Testis (tissue), 5 donors: ENCODE measurements at regions of chr3 and their contacts with region 1.

Region 1: GRCh38 chr3:100590114-100590839 is 19.1 kb upstream of the ADGRG7 start:
- DNase-seq: peak; percentile 81
- H3K4me3 ChIP-seq: no peak overlapping the region
- H3K27ac ChIP-seq: no peak overlapping the region
- H3K4me1 ChIP-seq: no peaks in the 10 kb centered on the region
- H3K27me3 ChIP-seq: no peaks in the 10 kb centered on the region
- CTCF ChIP-seq: peak; percentile 84 to 96 (median 94)
- POLR2A ChIP-seq: no peak

Region 2: DNA sequence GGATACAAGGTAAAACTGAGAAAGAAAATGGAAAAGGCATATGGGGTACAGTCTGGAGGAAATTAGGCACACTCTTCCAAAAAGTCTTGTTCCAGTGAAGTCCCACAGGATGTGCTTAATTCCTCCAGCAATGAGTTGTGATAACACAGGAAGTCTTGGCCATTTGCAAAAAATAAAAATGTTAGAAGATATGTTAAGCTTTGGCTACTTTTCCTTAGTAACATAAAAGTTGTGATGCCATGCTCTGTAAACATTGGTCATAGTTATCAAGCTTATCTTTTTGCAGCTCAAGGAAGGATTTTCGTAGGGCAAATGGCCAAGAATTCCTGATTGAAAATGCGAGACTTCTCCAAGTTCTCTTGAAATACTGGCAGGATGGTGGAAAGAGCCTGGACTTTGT is 162.6 kb before region 1 on chr3:
- intact Hi-C with region 1: no loop called
- DNase-seq: no peak
- H3K4me3 ChIP-seq: no peak overlapping the region
- H3K27ac ChIP-seq: no peak overlapping the region
- H3K4me1 ChIP-seq: no peaks in the 10 kb centered on the region
- H3K27me3 ChIP-seq: no peaks in the 10 kb centered on the region
- CTCF ChIP-seq: no peak
- POLR2A ChIP-seq: no peak

Region 3: DNA sequence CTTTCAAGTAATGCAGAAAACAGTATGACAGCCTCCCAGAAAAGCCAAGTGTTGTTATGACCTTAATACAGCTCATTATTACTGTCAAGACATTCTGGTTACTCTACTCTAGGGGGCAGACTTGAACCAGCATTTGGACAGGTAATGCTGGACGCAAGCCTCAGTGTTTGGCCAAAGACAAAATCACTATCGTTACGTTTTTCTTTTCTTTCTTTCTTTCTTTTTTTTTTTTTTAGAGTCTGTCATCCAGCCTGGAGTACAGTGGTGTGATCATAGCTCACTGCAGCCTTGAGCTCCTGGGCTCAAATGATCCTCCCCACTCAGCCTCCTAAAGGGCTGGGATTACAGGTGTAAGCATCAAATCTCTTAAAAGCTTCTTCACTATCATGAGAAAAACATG is 127.3 kb before region 1 on chr3:
- intact Hi-C with region 1: loop called (anchors 10 kb)
- DNase-seq: peak; percentile 53
- H3K4me3 ChIP-seq: no peak overlapping the region
- H3K27ac ChIP-seq: no peak overlapping the region
- H3K4me1 ChIP-seq: no peaks in the 10 kb centered on the region
- H3K27me3 ChIP-seq: no peaks in the 10 kb centered on the region
- CTCF ChIP-seq: peak; percentile 54 to 85 (median 59)
- POLR2A ChIP-seq: no peak

Region 4: GRCh38 chr3:100682056-100682853 is 92.0 kb after region 1 on chr3:
- intact Hi-C with region 1: no loop called
- DNase-seq: no peak
- H3K4me3 ChIP-seq: peak overlapping the region; percentile 7 to 50
- H3K27ac ChIP-seq: no peak overlapping the region
- H3K4me1 ChIP-seq: no peaks in the 10 kb centered on the region
- H3K27me3 ChIP-seq: no peaks in the 10 kb centered on the region
- CTCF ChIP-seq: no peak
- POLR2A ChIP-seq: no peak